Heart left ventricle (tissue), 16 donors: ENCODE measurements at regions of chr18 and their contacts with region 1.

Region 1: GRCh38 chr18:25737710-25738311 is 352.6 kb downstream of the SS18 start:
- DNase-seq: no peak
- ATAC-seq: peak in 1 of 4 donors; percentile 39
- H3K4me3 ChIP-seq: no peak overlapping the region
- H3K27ac ChIP-seq: no peak overlapping the region
- H3K4me1 ChIP-seq: no peaks in the 10 kb centered on the region
- H3K27me3 ChIP-seq: peaks cover 0 to 9% (median 0%) of the 10 kb centered on the region in 9 donors
- CTCF ChIP-seq: no peak
- POLR2A ChIP-seq: no peak

Region 2: DNA sequence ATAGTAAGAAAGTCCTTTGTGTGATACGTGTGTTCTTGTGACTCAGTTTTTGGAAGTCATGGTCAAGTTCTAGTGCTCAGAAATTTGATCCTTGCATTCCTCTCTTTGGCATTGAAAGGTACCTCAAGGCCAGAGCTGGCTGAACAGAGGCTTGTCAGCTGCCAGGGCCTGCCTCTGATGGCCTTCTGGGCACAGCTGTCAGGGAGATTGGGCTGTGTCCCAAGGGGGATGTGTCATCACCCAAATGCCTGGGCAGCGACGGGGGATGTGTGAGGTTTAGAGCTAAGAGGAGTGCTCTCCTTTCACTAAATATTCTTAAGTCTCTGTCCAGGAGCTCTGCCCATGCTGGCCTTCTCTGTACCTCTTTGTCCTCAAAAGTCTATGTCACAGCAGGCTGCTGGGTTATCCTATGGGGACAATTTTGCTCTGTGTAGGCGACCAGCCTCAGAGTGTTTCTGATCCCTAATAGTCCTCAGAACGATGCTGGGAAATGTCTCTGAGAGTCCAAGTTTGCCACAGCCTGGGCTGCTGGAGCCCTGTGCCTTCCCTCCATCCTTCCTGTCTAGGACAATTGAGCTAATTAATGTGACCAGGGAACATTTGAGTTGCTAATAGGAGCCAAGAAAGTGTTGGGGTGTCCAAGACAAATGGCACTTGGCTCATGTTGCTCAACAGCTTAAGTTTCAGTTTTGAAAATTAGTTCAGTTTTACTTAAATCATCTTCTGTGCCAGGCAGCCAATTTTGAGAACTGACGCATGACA is 270.4 kb before region 1 on chr18:
- intact Hi-C with region 1: no loop called
- DNase-seq: peak; percentile 59 to 87 (median 78)
- ATAC-seq: peak; percentile 98 to 99 (median 98)
- H3K4me3 ChIP-seq: no peak overlapping the region
- H3K27ac ChIP-seq: peak overlapping the region in 10 of 12 donors; percentile 18 to 64 (median 38)
- H3K4me1 ChIP-seq: peaks cover 0 to 27% (median 7%) of the 10 kb centered on the region in 12 donors
- H3K27me3 ChIP-seq: no peaks in the 10 kb centered on the region
- CTCF ChIP-seq: no peak
- POLR2A ChIP-seq: no peak

Region 3: DNA sequence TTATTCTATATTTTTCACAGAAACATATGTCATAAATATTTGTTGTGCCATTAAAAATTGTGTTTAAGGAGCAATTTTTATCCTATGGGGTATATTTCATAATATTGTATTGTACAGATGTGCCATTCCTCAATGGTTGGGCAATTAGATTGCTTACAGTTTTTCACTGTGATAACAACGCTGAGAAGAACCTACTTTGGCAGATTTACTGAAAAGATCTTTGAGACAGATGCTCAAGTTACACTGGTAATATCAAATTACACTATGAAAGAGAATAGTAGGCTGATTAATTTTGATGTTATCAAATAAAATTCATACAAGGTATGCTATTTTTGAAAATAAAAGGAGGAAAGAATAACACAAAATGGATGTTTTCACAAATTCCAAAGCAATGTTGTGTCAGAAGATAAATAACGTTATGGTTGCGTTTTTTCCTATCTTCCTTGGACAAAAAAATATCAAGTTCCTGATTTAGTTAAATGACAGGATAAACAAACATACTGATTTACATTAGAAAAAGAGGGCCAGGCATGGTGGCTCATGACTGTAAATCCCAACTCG is 50.8 kb before region 1 on chr18:
- intact Hi-C with region 1: loop called in 1 of 10 experiments (anchors 10 kb)
- DNase-seq: no peak
- ATAC-seq: no peak
- H3K4me3 ChIP-seq: no peak overlapping the region
- H3K27ac ChIP-seq: no peak overlapping the region
- H3K4me1 ChIP-seq: no peaks in the 10 kb centered on the region
- H3K27me3 ChIP-seq: no peaks in the 10 kb centered on the region
- CTCF ChIP-seq: no peak
- POLR2A ChIP-seq: no peak